ENCODE measurements at regions of chr6 and their contacts with region 1.

Region 1: DNA sequence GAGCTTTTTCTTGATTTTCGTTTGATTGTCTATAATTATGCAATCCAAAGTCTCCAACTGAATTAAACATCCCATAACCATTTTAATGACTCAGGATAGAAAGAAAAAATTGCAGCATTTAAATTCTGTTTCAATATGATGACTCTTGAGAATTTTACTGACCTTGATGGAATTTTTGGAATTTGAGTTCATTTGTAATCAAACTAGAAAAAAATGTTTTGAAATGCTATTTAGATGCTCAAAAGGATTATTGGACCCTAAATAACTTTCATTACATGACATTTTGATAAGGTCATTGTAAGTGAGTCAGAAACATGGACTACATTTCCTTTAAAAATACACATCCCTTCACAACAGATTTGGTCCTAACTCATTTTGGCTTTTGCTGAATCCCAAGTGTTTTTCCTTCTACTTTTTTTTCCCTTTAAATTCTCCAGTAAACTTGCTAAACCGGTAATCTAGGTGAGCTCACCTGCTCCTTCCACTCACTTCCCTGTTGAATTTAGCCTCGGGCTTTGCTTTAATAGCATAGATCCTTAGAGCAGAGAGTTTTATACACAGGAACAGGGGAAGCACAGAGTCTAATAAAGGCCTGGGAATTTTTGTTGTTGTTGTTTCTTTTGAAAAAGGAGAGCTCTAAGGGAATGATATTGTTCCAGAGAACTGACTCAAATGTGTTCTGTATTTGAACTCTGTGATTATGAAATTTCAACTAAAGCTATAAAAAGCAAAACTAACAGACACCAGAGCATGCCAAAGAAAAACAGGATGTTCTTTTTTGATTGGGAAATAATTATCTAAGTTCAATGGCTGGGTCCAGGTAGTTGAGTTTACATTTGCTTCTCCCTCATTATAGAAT is 1088.2 kb upstream of the CITED2 start:
- DNase-seq: peak; percentile 10
- H3K4me3 Mint-ChIP-seq: peak overlapping the region; percentile 28
- H3K27ac Mint-ChIP-seq: peak overlapping the region; percentile 85
- H3K4me1 Mint-ChIP-seq: peaks cover 44% of the 10 kb centered on the region
- H3K27me3 Mint-ChIP-seq: no peaks in the 10 kb centered on the region
- CTCF ChIP-seq: no peak

Region 2: GRCh38 chr6:140537819-140538705 is 75.4 kb after region 1 on chr6:
- CTCF ChIA-PET with region 1: no interaction called
- intact Hi-C with region 1: loop called (anchors 10 kb)
- DNase-seq: peak; percentile 44
- H3K4me3 Mint-ChIP-seq: peak overlapping the region; percentile 51
- H3K27ac Mint-ChIP-seq: peak overlapping the region; percentile 90
- H3K4me1 Mint-ChIP-seq: peaks cover 12% of the 10 kb centered on the region
- H3K27me3 Mint-ChIP-seq: no peaks in the 10 kb centered on the region
- CTCF ChIP-seq: no peak

Region 3: GRCh38 chr6:140623498-140623897 is 160.8 kb after region 1 on chr6:
- CTCF ChIA-PET with region 1: interaction called, 11 read pairs
- intact Hi-C with region 1: no loop called
- DNase-seq: no peak
- H3K4me3 Mint-ChIP-seq: no peak overlapping the region
- H3K27ac Mint-ChIP-seq: peak overlapping the region; percentile 91
- H3K4me1 Mint-ChIP-seq: no peaks in the 10 kb centered on the region
- H3K27me3 Mint-ChIP-seq: no peaks in the 10 kb centered on the region
- CTCF ChIP-seq: no peak

Region 4: DNA sequence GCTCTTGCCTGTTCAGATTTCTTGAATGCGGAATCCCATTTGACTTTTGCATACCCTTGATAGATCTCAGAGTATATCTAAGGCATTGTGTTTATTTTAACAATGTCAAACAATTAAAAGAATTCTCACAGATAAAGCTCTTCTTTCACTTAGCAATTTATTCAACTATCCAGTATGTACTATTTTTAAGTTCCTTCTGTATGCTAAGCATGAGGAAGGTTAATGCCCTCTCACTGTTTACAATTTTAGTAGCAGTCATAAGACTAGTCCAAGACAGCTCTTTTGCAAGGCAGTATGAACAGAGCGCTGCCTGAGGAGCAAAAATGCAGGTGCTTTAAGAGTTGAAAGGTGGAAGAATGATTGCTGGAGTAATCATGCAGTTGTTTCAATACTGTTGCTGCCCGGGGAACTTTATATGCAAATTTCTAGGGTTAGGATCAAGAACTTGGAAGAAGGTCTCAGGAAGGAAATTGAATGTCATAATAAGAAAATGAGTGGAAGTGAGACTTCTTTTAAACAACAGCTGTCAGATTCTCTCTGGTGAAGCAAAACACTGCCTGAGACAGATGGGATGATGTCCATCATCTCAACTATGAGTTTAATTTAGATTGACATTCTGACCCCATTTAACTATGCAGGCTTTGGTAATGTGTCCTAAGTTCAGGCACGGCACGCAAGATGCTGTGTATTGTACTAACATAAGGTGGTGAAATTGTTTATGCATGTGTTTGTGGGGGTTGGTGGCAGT is 215.3 kb after region 1 on chr6:
- CTCF ChIA-PET with region 1: no interaction called
- intact Hi-C with region 1: no loop called
- DNase-seq: no peak
- H3K4me3 Mint-ChIP-seq: no peak overlapping the region
- H3K27ac Mint-ChIP-seq: no peak overlapping the region
- H3K4me1 Mint-ChIP-seq: no peaks in the 10 kb centered on the region
- H3K27me3 Mint-ChIP-seq: no peaks in the 10 kb centered on the region
- CTCF ChIP-seq: no peak

Region 5: GRCh38 chr6:140879946-140880345 is 417.3 kb after region 1 on chr6:
- CTCF ChIA-PET with region 1: no interaction called
- intact Hi-C with region 1: no loop called
- DNase-seq: no peak
- H3K4me3 Mint-ChIP-seq: peak overlapping the region; percentile 14
- H3K27ac Mint-ChIP-seq: peak overlapping the region; percentile 63
- H3K4me1 Mint-ChIP-seq: peaks cover 8% of the 10 kb centered on the region
- H3K27me3 Mint-ChIP-seq: no peaks in the 10 kb centered on the region
- CTCF ChIP-seq: no peak